Ascending aorta (tissue), 2 donors: ENCODE measurements at regions of chr7 and their contacts with region 1.

Region 1: GRCh38 chr7:77326696-77327628 is 89.2 kb downstream of the GSAP start:
- DNase-seq: peak; percentile 43 to 79
- H3K4me3 ChIP-seq: no peak overlapping the region
- H3K27ac ChIP-seq: peak overlapping the region; percentile 76 to 88
- H3K4me1 ChIP-seq: peaks cover 26 to 57% of the 10 kb centered on the region in 2 donors
- H3K27me3 ChIP-seq: no peaks in the 10 kb centered on the region
- CTCF ChIP-seq: no peak

Region 2: DNA sequence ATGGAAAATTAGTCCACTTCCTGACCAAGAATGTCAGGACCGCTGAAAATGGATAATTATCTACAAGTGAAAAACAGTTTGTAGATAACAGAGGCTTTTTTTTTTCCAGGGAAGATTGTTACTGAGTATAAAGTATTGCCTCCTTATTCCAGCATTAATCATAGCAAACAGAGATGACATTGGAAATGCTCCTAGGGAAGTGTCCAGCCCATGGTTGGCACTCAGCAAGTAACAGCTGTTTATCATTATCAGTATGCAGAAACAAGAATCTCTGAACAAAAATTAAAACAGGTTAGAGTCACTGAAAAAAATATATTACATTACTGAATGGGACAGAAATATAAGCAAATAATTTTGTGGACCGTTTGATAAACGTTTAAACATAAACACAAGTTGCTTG is 142.0 kb before region 1 on chr7:
- intact Hi-C with region 1: loop called (anchors 5 kb)
- DNase-seq: no peak
- H3K4me3 ChIP-seq: no peak overlapping the region
- H3K27ac ChIP-seq: peak overlapping the region; percentile 27 to 56
- H3K4me1 ChIP-seq: peaks cover 0 to 13% of the 10 kb centered on the region in 2 donors
- H3K27me3 ChIP-seq: no peaks in the 10 kb centered on the region
- CTCF ChIP-seq: no peak

Region 3: DNA sequence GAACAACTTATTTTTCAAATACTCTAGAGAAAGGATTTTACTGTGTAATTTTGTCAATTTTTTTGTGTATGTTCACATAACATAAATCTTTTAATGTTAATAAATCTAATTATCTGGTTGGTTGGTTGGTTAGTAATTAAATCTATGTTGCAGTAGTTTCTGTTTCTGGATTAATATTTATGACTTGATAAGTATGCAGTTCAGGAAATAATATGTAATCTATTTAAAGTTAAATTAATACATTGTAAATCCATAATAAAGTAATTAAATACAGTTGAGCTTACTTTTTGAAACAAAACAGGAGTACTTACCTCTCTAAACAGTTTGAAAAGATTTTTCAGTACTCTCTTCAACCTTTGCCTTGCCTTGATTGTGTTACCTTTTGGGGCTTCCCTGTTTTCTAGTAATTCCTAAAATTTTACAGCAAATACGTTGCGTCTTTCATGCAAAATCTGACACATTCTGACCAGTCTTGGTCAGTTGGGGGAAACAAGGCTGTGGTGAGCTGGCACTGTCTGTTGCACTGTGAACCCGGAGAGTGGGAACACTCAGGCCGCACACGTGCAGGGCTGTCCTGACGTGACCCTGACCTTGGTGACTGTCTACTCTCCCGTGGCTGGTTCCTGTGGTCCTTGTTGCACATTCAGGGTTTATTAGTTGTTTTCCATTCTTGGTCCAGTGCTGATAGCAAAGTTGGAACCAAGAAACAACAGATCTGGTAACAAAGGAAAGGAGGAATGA is 81.8 kb before region 1 on chr7:
- intact Hi-C with region 1: no loop called
- DNase-seq: peak in 1 of 2 donors; percentile 14
- H3K4me3 ChIP-seq: peak overlapping the region in 1 of 2 donors; percentile 19
- H3K27ac ChIP-seq: peak overlapping the region in 1 of 2 donors; percentile 27
- H3K4me1 ChIP-seq: peaks cover 15 to 17% of the 10 kb centered on the region in 2 donors
- H3K27me3 ChIP-seq: no peaks in the 10 kb centered on the region
- CTCF ChIP-seq: no peak

Region 4: DNA sequence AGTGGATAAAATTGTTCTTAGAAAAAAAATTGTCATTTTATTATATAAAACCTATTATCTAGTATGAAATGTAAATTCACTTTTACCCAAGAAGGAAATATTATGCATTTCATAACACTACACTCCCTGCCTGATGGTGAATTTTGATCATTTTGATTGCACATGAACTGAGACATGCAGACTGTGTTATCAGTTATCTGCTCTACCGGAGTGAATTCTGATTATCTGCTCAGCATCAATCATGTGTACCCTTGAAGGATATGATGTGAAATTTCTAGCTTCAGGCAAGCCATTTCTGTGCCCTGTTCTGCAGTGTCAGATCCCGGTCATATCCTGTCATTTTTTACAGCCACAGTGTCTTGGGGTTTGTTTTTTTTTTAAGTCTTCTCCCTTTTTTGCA is 42.3 kb before region 1 on chr7:
- intact Hi-C with region 1: loop called (anchors 2 kb)
- DNase-seq: no peak
- H3K4me3 ChIP-seq: peak overlapping the region; percentile 0 to 54
- H3K27ac ChIP-seq: peak overlapping the region; percentile 9 to 50
- H3K4me1 ChIP-seq: peaks cover 14 to 33% of the 10 kb centered on the region in 2 donors
- H3K27me3 ChIP-seq: no peaks in the 10 kb centered on the region
- CTCF ChIP-seq: no peak

Region 5: DNA sequence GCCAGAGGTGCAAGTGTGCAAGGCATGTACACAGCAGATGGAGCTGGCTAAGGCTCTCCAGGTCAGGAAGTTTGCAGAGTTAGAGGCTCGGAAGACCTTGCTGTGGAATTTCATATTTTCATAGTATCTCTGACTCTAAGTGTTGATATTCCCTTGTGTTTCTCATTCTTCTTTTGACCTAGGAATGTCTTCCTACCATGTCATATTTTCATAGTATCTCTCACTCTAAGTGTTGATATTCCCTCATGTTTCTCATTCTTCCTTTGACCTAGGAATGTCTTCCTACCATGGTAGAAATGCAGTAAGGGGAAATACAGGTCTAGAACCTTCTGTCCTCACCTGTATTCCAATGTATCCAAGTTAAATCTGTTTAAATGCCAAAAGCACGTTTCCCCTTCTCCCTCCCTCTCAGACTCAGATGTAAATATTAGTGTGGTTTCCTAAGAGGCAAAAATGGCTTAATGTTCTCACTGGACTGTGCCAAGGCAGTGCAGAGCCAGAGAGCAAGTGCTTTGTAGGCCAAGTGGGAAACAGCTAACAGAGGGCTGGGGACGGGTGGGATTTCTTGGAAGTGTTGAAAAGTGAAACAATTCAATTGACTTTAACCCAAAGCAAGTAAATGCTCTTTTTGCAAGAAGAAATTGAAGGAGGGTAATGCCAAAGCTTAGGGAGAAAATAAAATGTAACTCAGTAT is 14.0 kb before region 1 on chr7:
- intact Hi-C with region 1: loop called (anchors 2 kb)
- DNase-seq: no peak
- H3K4me3 ChIP-seq: no peak overlapping the region
- H3K27ac ChIP-seq: peak overlapping the region; percentile 30 to 72
- H3K4me1 ChIP-seq: peaks cover 9 to 28% of the 10 kb centered on the region in 2 donors
- H3K27me3 ChIP-seq: no peaks in the 10 kb centered on the region
- CTCF ChIP-seq: no peak

Region 6: GRCh38 chr7:77910124-77910523 is 583.2 kb after region 1 on chr7:
- intact Hi-C with region 1: no loop called
- DNase-seq: no peak
- H3K4me3 ChIP-seq: no peak overlapping the region
- H3K27ac ChIP-seq: no peak overlapping the region
- H3K4me1 ChIP-seq: peaks cover 0 to 16% of the 10 kb centered on the region in 2 donors
- H3K27me3 ChIP-seq: no peaks in the 10 kb centered on the region
- CTCF ChIP-seq: no peak